GM12878 (cell line): ENCODE measurements at regions of chr18 and their contacts with region 1.

Region 1: DNA sequence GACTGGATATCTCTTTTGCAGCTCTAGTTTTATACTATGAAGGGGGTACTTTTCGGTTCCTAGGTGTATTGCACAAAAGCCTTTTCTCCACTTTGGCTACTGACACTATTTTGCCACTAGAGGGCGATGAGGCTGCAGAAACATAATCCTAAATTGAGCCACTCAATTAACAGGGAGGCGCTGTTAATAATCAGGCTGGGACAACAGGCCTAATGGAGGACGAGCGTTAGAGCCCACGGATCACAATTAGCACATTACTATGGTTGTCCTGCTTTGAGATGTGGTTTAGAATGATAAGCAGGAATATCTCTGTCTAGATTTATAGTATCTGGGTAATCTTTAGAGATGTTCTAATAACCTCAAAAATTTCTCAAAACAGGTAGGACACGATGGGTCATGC is 62.2 kb upstream of the PMAIP1 start:
- DNase-seq: peak; percentile 82
- ATAC-seq: peak; percentile 72
- H3K4me3 ChIP-seq: no peak overlapping the region
- H3K27ac ChIP-seq: no peak overlapping the region
- H3K4me1 ChIP-seq: peaks cover 31% of the 10 kb centered on the region
- H3K27me3 ChIP-seq: no peaks in the 10 kb centered on the region
- CTCF ChIP-seq: peak; percentile 85 to 98 (median 91)
- EP300 ChIP-seq: no peak
- POLR2A ChIP-seq: no peak
- RAD21 ChIP-seq: peak; percentile 98

Region 2: GRCh38 chr18:59823596-59824195 is 13.9 kb before region 1 on chr18:
- CTCF ChIA-PET with region 1: interaction called, 33 read pairs
- POLR2A ChIA-PET with region 1: no interaction called
- RAD21 ChIA-PET with region 1: interaction called, 12 read pairs
- SMC1A ChIA-PET with region 1: interaction called, 35 read pairs
- in situ Hi-C with region 1: no loop called
- intact Hi-C with region 1: no loop called
- DNase-seq: no peak
- ATAC-seq: peak; percentile 92
- H3K4me3 ChIP-seq: no peak overlapping the region
- H3K27ac ChIP-seq: no peak overlapping the region
- H3K4me1 ChIP-seq: no peaks in the 10 kb centered on the region
- H3K27me3 ChIP-seq: no peaks in the 10 kb centered on the region
- CTCF ChIP-seq: peak; percentile 80 to 87 (median 86)
- EP300 ChIP-seq: no peak
- POLR2A ChIP-seq: no peak
- RAD21 ChIP-seq: peak; percentile 91

Region 3: GRCh38 chr18:59899298-59900221 is 62.0 kb after region 1 on chr18 and contains the start of gene PMAIP1:
- CTCF ChIA-PET with region 1: interaction called, 20 read pairs
- POLR2A ChIA-PET with region 1: interaction called, 24 read pairs
- RAD21 ChIA-PET with region 1: interaction called, 85 read pairs
- SMC1A ChIA-PET with region 1: interaction called, 54 read pairs
- in situ Hi-C with region 1: loop called (anchors 10 kb)
- intact Hi-C with region 1: loop called (anchors 1 kb)
- DNase-seq: no peak
- ATAC-seq: peak; percentile 73
- H3K4me3 ChIP-seq: peak within 1 kb of the TSS; percentile 84
- H3K27ac ChIP-seq: peak within 1 kb of the TSS; percentile 95
- H3K4me1 ChIP-seq: no peaks in the 10 kb centered on the region; the same call in 1 of the 2 replicates
- H3K27me3 ChIP-seq: no peaks in the 10 kb centered on the region
- CTCF ChIP-seq: no peak
- EP300 ChIP-seq: 0 out of 4 replicates have a peak, but pooled peaks of 1 of the 2 experiments have one; percentile 2
- POLR2A ChIP-seq: peak; percentile 100
- RAD21 ChIP-seq: peak; percentile 6; the same call in 1 of the 2 replicates
- polyA plus RNA-seq, gene PMAIP1: 74.0 to 119 TPM

Region 4: GRCh38 chr18:59927246-59927825 is 89.8 kb after region 1 on chr18:
- CTCF ChIA-PET with region 1: interaction called, 29 read pairs
- POLR2A ChIA-PET with region 1: interaction called, 7 read pairs
- RAD21 ChIA-PET with region 1: interaction called, 43 read pairs
- SMC1A ChIA-PET with region 1: interaction called, 111 read pairs
- in situ Hi-C with region 1: no loop called
- intact Hi-C with region 1: loop called (anchors 1 kb)
- DNase-seq: peak; percentile 98
- ATAC-seq: peak; percentile 82
- H3K4me3 ChIP-seq: no peak overlapping the region
- H3K27ac ChIP-seq: peak overlapping the region; percentile 93
- H3K4me1 ChIP-seq: peaks cover 49% of the 10 kb centered on the region
- H3K27me3 ChIP-seq: no peaks in the 10 kb centered on the region
- CTCF ChIP-seq: no peak
- EP300 ChIP-seq: peak; percentile 63 to 67; a peak in 3 of 4 replicates
- POLR2A ChIP-seq: no peak
- RAD21 ChIP-seq: no peak

Region 5: DNA sequence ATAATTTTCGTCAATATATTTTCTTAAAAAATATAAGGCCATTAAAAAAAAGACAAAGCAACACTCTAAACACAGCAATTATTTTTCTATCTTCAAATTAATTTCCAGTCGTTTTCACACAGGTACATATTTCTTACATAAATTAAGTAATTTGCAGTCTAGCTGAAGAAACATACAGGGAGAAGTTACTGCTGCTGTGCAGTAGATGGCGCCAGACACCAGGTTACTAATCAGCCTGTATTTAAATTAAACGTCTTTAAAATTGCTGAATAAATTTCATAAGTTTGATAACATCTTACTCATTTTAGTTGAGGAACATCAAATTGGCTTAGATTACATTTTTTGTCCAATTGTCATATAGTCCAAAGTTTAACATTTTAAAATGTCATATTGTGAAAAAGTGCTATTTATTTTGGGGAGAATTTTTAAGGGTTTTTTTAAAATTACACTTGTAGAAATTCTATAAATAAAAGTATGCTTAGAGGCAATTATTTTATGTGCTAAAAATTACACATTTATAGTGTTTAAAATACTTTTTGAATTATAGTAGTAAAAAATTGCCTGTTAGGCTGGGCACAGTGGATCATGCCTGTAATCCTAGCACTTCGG is 150.6 kb after region 1 on chr18:
- CTCF ChIA-PET with region 1: interaction called, 235 read pairs
- POLR2A ChIA-PET with region 1: interaction called, 3 read pairs
- RAD21 ChIA-PET with region 1: interaction called, 63 read pairs
- SMC1A ChIA-PET with region 1: interaction called, 118 read pairs
- in situ Hi-C with region 1: no loop called
- intact Hi-C with region 1: loop called (anchors 2 kb)
- DNase-seq: no peak
- ATAC-seq: peak; percentile 81
- H3K4me3 ChIP-seq: no peak overlapping the region
- H3K27ac ChIP-seq: no peak overlapping the region
- H3K4me1 ChIP-seq: no peaks in the 10 kb centered on the region
- H3K27me3 ChIP-seq: no peaks in the 10 kb centered on the region
- CTCF ChIP-seq: peak; percentile 83 to 90 (median 87)
- EP300 ChIP-seq: no peak
- POLR2A ChIP-seq: no peak
- RAD21 ChIP-seq: peak; percentile 96

Region 6: DNA sequence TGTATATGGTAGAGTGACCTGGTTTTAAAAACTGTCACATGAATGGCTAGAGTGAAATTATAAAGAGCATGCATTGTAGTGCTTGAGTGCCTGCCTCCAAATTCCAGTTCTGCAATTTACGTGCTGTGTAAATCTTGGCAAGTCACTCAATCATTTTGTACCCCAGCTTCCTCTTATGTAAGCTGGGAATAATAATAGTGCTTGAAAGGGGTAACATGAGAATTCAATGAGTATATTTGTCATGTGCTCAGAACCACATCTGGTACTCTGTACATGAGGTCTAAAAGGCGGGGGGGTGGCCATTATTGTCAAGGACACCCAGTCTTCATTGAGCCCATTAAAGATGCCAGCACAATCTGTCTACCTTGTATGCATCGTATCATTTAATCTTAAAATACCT is 320.2 kb after region 1 on chr18:
- CTCF ChIA-PET with region 1: no interaction called
- POLR2A ChIA-PET with region 1: no interaction called
- RAD21 ChIA-PET with region 1: no interaction called
- SMC1A ChIA-PET with region 1: no interaction called
- in situ Hi-C with region 1: no loop called
- intact Hi-C with region 1: loop called (anchors 10 kb)
- DNase-seq: no peak
- ATAC-seq: no peak
- H3K4me3 ChIP-seq: no peak overlapping the region
- H3K27ac ChIP-seq: no peak overlapping the region
- H3K4me1 ChIP-seq: no peaks in the 10 kb centered on the region
- H3K27me3 ChIP-seq: no peaks in the 10 kb centered on the region
- CTCF ChIP-seq: no peak
- EP300 ChIP-seq: no peak
- POLR2A ChIP-seq: no peak
- RAD21 ChIP-seq: no peak

Region 7: GRCh38 chr18:60554967-60555366 is 717.4 kb after region 1 on chr18:
- CTCF ChIA-PET with region 1: interaction called, 3 read pairs
- POLR2A ChIA-PET with region 1: no interaction called
- RAD21 ChIA-PET with region 1: no interaction called
- SMC1A ChIA-PET with region 1: interaction called, 3 read pairs
- in situ Hi-C with region 1: loop called (anchors 10 kb)
- intact Hi-C with region 1: no loop called
- DNase-seq: no peak
- ATAC-seq: no peak; the same call in 2 of the 3 replicates
- H3K4me3 ChIP-seq: no peak overlapping the region
- H3K27ac ChIP-seq: no peak overlapping the region
- H3K4me1 ChIP-seq: no peaks in the 10 kb centered on the region
- H3K27me3 ChIP-seq: no peaks in the 10 kb centered on the region
- CTCF ChIP-seq: no peak
- EP300 ChIP-seq: no peak
- POLR2A ChIP-seq: no peak
- RAD21 ChIP-seq: no peak